Caco-2 (cell line): ENCODE measurements at regions of chr11 and their contacts with region 1.

Region 1: GRCh38 chr11:102666331-102666957 is 39.1 kb downstream of the MMP27 start:
- DNase-seq: peak; percentile 55 to 68
- H3K4me3 ChIP-seq: no peak overlapping the region
- H3K4me3 Mint-ChIP-seq: no peak overlapping the region
- H3K27ac Mint-ChIP-seq: no peak overlapping the region
- H3K4me1 ChIP-seq: 0 out of 2 replicates have a peak, but pooled peaks cover 5% of the 10 kb centered on the region
- H3K4me1 Mint-ChIP-seq: peaks cover 6% of the 10 kb centered on the region
- H3K27me3 ChIP-seq: no peaks in the 10 kb centered on the region
- H3K27me3 Mint-ChIP-seq: peaks cover 5% of the 10 kb centered on the region
- CTCF ChIP-seq: peak; percentile 98 to 99

Region 2: GRCh38 chr11:101914738-101915426 is 751.6 kb before region 1 on chr11 and contains the start of gene CEP126:
- CTCF ChIA-PET with region 1: no interaction called
- POLR2A ChIA-PET with region 1: no interaction called
- intact Hi-C with region 1: loop called (anchors 5 kb)
- DNase-seq: peak; percentile 97 to 98
- H3K4me3 ChIP-seq: peak within 1 kb of the TSS; percentile 66
- H3K4me3 Mint-ChIP-seq: peak within 1 kb of the TSS; percentile 92
- H3K27ac Mint-ChIP-seq: peak within 1 kb of the TSS; percentile 94
- H3K4me1 ChIP-seq: peaks cover 31% of the 10 kb centered on the region
- H3K4me1 Mint-ChIP-seq: peaks cover 41% of the 10 kb centered on the region
- H3K27me3 ChIP-seq: no peaks in the 10 kb centered on the region
- H3K27me3 Mint-ChIP-seq: no peaks in the 10 kb centered on the region
- CTCF ChIP-seq: peak; percentile 27 to 94
- total RNA-seq, gene CEP126: 4.3 and 4.6 TPM in 2 replicates

Region 3: GRCh38 chr11:102341844-102342318 is 324.6 kb before region 1 on chr11:
- CTCF ChIA-PET with region 1: interaction called, 45 read pairs
- POLR2A ChIA-PET with region 1: no interaction called
- intact Hi-C with region 1: loop called (anchors 1 kb)
- DNase-seq: peak; percentile 86 to 87
- H3K4me3 ChIP-seq: no peak overlapping the region
- H3K4me3 Mint-ChIP-seq: no peak overlapping the region
- H3K27ac Mint-ChIP-seq: no peak overlapping the region
- H3K4me1 ChIP-seq: peaks cover 4% of the 10 kb centered on the region; the same call in 1 of the 2 replicates
- H3K4me1 Mint-ChIP-seq: peaks cover 16% of the 10 kb centered on the region
- H3K27me3 ChIP-seq: no peaks in the 10 kb centered on the region
- H3K27me3 Mint-ChIP-seq: no peaks in the 10 kb centered on the region
- CTCF ChIP-seq: peak; percentile 92 to 95

Region 4: DNA sequence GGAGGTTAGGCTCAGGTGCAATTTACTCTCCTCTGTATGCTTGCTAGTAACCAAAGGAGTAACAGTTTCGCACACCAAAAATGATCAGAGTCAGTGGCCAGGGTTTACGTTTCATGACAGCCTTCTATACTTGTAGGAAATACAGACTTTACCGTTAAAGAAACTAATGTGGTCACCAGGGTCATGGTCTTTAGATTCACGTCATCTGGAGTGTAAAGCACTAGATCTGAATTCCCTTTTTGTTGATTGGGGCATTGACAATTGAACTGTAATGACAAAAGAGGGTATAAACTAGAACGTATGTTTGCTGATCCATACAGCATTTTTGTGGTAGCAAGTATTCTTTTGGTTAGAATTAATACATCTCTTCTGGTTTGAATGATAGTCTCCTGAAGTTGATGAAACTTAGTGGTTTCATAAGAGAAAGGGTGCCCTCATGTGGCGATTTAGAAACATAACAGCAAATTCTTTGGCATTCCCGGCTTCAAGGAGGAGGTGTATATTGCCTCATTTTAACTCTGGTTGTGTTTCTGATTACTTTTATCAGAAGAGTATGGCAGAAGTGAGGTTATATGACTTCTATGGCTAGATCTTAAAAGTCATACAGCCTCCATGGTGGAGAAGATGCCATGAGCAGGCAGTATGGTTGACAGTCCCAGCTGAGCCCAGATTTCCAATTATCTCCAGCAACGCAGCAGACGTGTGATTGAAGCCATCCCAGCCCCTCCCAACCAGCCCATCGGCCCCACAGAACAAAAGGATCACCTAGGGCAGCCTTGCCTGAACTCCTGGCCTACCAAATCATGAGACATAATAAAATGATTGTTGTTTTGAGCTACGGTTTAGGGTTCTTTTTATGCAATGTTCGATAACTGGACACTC is 171.0 kb before region 1 on chr11:
- CTCF ChIA-PET with region 1: interaction called, 7 read pairs
- POLR2A ChIA-PET with region 1: no interaction called
- intact Hi-C with region 1: loop called (anchors 1 kb)
- DNase-seq: peak; percentile 57 to 81
- H3K4me3 ChIP-seq: no peak overlapping the region
- H3K4me3 Mint-ChIP-seq: peak overlapping the region; percentile 34
- H3K27ac Mint-ChIP-seq: peak overlapping the region; percentile 72
- H3K4me1 ChIP-seq: peaks cover 33% of the 10 kb centered on the region
- H3K4me1 Mint-ChIP-seq: peaks cover 25% of the 10 kb centered on the region
- H3K27me3 ChIP-seq: no peaks in the 10 kb centered on the region
- H3K27me3 Mint-ChIP-seq: no peaks in the 10 kb centered on the region
- CTCF ChIP-seq: peak; percentile 82 to 93

Region 5: DNA sequence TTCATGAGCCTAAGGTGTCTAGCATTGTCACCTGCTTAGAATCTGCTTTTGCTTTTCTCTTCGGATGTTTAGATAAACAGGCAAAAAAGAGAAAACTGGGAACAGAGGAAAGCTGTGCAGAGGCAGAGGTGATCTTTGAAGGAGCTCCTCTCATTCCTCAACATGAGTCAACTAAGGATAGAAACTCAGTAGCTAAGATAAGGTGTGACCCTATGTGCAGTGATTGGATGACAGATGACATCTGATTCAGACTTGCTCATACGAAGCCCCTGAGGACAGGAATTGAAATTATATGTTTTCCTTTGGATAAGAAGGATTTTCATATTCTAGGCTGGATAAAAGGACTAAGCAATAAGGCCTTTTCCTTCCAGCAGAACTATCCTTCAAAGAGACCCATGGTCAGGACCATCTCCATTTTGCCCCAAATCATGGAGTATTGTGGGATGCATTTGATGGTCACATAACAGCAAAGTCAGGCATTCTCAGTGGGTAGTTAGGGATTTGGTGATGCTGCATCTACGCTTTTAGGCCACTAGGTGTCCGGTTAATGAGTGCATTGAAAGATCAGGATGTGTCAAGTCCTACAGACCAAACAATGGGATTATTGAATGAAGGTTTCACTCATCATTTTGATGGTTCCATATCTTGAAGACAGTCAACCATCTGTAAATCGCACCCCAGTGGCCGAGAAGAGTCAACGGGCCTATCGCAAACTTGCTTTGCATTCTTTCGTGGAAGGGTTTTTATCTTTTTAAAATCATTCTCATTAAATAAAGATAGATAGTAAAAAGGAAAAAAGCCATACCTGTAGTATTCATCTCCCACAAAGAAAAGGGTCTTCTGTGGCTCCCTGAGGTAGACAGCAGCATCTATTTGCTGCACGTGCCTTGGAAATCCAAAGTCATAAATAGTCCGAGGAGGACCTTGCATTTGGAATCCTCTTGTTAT is 73.5 kb before region 1 on chr11:
- CTCF ChIA-PET with region 1: interaction called, 5 read pairs
- POLR2A ChIA-PET with region 1: no interaction called
- intact Hi-C with region 1: loop called (anchors 1 kb)
- DNase-seq: peak in 1 of 2 experiments; percentile 54
- H3K4me3 ChIP-seq: no peak overlapping the region
- H3K4me3 Mint-ChIP-seq: no peak overlapping the region
- H3K27ac Mint-ChIP-seq: no peak overlapping the region
- H3K4me1 ChIP-seq: peaks cover 25% of the 10 kb centered on the region
- H3K4me1 Mint-ChIP-seq: peaks cover 17% of the 10 kb centered on the region
- H3K27me3 ChIP-seq: no peaks in the 10 kb centered on the region
- H3K27me3 Mint-ChIP-seq: no peaks in the 10 kb centered on the region
- CTCF ChIP-seq: peak; percentile 84 to 88

Region 6: GRCh38 chr11:102630598-102631448 is 35.6 kb before region 1 on chr11:
- CTCF ChIA-PET with region 1: interaction called, 11 read pairs
- POLR2A ChIA-PET with region 1: no interaction called
- intact Hi-C with region 1: no loop called
- DNase-seq: no peak
- H3K4me3 ChIP-seq: no peak overlapping the region
- H3K4me3 Mint-ChIP-seq: no peak overlapping the region
- H3K27ac Mint-ChIP-seq: no peak overlapping the region
- H3K4me1 ChIP-seq: no peaks in the 10 kb centered on the region
- H3K4me1 Mint-ChIP-seq: no peaks in the 10 kb centered on the region
- H3K27me3 ChIP-seq: no peaks in the 10 kb centered on the region
- H3K27me3 Mint-ChIP-seq: no peaks in the 10 kb centered on the region
- CTCF ChIP-seq: no peak